ENCODE measurements at regions of chr6 and their contacts with region 1.

Region 1: GRCh38 chr6:42928986-42929820 is at the start of gene CNPY3:
- DNase-seq: peak; percentile 90

Region 2: GRCh38 chr6:42911171-42912021 is 17.8 kb before region 1 on chr6:
- CTCF ChIA-PET with region 1: no interaction called
- POLR2A ChIA-PET with region 1: interaction called, 32 read pairs
- DNase-seq: no peak

Region 3: DNA sequence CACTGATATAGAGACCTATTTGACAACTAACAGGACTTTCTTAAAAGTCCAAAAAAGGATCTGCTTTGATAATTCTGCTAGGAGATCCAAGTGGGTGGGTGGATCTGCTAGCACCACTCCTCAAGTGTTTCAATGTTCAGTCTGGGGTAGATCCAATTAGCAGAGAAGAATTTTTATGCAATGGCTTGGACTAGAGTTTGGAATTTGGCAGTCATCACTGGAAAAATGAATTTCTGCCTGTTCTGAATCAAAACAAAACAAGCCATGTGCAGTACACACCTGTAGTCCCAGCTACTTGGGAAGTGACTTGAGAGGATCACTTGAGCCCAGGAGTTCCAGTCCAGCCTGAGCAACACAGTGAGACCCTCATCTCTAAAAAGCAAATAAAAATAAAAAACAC is 18.7 kb after region 1 on chr6:
- CTCF ChIA-PET with region 1: no interaction called
- POLR2A ChIA-PET with region 1: interaction called, 13 read pairs
- DNase-seq: no peak

Region 4: GRCh38 chr6:42970871-42971612 is 41.8 kb after region 1 on chr6:
- CTCF ChIA-PET with region 1: no interaction called
- POLR2A ChIA-PET with region 1: interaction called, 10 read pairs
- DNase-seq: no peak

Region 5: GRCh38 chr6:42978839-42979522 is 49.8 kb after region 1 on chr6 and contains the start of gene PEX6:
- CTCF ChIA-PET with region 1: no interaction called
- POLR2A ChIA-PET with region 1: interaction called, 47 read pairs
- DNase-seq: peak; percentile 84

Region 6: GRCh38 chr6:43013843-43014433 is 84.7 kb after region 1 on chr6 and contains the starts of genes KLHDC3 and MEA1:
- CTCF ChIA-PET with region 1: no interaction called
- POLR2A ChIA-PET with region 1: interaction called, 26 read pairs
- DNase-seq: peak; percentile 99

Region 7: DNA sequence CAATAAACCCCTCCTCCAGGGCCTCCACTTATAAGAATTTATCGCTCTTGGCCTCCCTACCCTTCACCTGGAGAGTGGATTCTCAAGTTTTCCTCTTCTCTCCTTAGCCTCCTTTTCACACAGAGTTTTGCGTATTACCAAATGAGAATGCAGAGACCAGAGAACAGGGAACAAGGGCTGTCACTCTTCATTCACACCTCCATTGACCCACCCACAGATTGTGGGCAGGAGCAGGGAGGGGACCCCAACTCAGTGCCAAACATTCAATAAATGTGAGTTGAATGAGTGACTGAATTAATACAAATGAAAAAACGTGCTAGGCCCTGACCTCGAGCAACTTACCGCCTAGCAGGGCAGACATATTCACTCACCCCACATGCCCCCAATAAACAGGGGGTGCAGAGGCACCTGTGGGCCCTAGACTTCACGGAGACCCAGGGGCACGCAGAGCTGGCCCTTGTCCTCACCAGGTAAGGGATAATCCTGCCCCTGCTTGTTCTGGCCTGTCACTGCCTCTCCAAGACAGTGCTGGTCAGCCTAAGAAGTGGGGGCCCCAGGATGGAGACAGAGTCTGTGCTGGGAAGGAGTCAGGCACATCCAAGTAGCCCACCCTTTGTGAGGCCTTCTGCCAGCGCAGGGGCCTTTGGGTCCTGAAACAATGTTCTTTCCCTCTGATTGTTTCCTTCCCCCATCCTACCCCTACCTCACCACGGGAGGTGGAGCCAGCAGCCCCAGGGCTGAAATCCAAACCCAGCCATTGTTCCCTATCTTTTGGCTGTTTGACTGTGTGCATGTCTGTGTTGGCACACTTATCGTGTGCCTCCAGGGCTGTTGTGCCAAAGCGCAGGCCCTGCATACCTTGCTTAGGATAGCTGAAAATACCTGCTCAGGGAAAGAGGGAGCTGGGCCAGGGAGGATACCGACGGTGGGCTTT is 539.8 kb after region 1 on chr6:
- CTCF ChIA-PET with region 1: no interaction called
- POLR2A ChIA-PET with region 1: no interaction called
- DNase-seq: no peak

Measured in HEK293T (cell line).